ENCODE measurements at regions of chr18 and their contacts with region 1.

Region 1: GRCh38 chr18:35231052-35231451 is 9.8 kb upstream of the ZNF397 start:
- DNase-seq: peak; percentile 66 to 91 (median 74)
- ATAC-seq: peak; percentile 97
- H3K4me3 ChIP-seq: no peak overlapping the region
- H3K4me3 Mint-ChIP-seq: no peak overlapping the region
- H3K27ac ChIP-seq: no peak overlapping the region
- H3K27ac Mint-ChIP-seq: no peak overlapping the region
- H3K4me1 ChIP-seq: no peaks in the 10 kb centered on the region
- H3K4me1 Mint-ChIP-seq: peaks cover 4% of the 10 kb centered on the region
- H3K27me3 ChIP-seq: no peaks in the 10 kb centered on the region
- H3K27me3 Mint-ChIP-seq: no peaks in the 10 kb centered on the region
- CTCF ChIP-seq: peak; percentile 90

Region 2: DNA sequence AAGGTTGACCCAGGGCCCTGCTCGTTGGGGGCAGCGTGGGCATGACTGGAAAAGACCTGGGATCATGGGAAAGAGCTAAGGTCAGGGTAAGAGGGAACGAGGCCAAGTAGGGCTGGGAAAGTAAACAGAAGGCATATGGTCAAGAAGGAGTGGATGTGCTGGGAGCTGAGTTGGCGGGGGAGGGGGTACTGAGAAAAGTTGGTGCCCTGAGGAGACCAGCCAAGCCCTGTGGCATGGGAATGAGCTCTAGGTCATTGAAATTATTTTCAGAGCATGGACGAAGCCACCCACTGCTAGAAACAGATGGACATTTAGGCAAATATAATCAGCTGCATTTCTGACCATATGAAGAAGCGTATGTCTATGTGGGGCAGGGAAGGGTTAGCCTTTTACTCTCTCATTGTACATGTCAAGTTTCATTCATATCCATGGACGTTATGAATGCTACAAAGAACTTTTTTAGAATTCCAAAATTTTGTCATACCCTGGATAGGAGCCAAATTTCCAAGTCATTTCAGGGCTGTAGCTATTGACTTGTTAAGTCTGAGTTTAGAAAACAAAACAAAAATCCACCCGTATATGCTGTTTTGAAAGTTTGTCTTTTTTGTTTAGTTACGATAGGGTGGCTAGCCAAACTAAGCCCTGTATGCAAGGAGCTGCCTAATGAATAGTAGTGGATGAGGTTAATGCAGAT is 170.8 kb before region 1 on chr18:
- CTCF ChIA-PET with region 1: no interaction called
- POLR2A ChIA-PET with region 1: no interaction called
- intact Hi-C with region 1: no loop called
- DNase-seq: no peak
- ATAC-seq: no peak
- H3K4me3 ChIP-seq: no peak overlapping the region
- H3K4me3 Mint-ChIP-seq: no peak overlapping the region
- H3K27ac ChIP-seq: no peak overlapping the region
- H3K27ac Mint-ChIP-seq: no peak overlapping the region
- H3K4me1 ChIP-seq: peaks cover 16% of the 10 kb centered on the region
- H3K4me1 Mint-ChIP-seq: peaks cover 76% of the 10 kb centered on the region
- H3K27me3 ChIP-seq: no peaks in the 10 kb centered on the region
- H3K27me3 Mint-ChIP-seq: no peaks in the 10 kb centered on the region
- CTCF ChIP-seq: no peak

Region 3: DNA sequence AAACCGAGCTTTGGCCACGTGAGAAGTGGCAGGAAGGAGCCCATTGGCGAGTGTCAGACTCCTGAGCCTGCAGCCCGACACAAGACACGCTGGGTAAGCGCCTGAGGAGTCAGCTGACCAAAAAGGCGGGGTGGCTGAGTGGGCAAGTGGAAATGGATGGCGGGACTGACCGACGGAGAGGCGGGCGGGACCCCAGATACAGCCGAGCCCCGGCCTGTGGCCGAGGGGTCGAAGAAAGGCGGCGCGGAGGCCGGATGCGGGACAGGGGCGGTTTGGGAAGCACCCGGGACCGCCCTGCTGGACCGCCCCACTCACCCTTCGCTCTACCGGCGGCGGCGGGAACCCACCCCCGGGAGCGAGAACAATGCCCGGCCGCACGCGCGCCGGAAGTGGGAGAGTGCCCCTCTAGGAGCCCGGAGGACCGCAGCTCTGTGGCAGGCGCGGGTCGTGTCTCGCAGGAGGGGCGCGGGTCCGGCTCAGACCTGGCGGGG is 36.2 kb after region 1 on chr18:
- CTCF ChIA-PET with region 1: interaction called, 3 read pairs
- POLR2A ChIA-PET with region 1: no interaction called
- intact Hi-C with region 1: loop called in 1 of 2 experiments (anchors 5 kb)
- DNase-seq: peak; percentile 40 to 85 (median 66)
- ATAC-seq: peak; percentile 76
- H3K4me3 ChIP-seq: peak overlapping the region; percentile 76
- H3K4me3 Mint-ChIP-seq: peak overlapping the region; percentile 96
- H3K27ac ChIP-seq: peak overlapping the region; percentile 69 to 75
- H3K27ac Mint-ChIP-seq: peak overlapping the region; percentile 92
- H3K4me1 ChIP-seq: peaks cover 18% of the 10 kb centered on the region
- H3K4me1 Mint-ChIP-seq: peaks cover 28% of the 10 kb centered on the region
- H3K27me3 ChIP-seq: no peaks in the 10 kb centered on the region
- H3K27me3 Mint-ChIP-seq: no peaks in the 10 kb centered on the region
- CTCF ChIP-seq: no peak

Region 4: DNA sequence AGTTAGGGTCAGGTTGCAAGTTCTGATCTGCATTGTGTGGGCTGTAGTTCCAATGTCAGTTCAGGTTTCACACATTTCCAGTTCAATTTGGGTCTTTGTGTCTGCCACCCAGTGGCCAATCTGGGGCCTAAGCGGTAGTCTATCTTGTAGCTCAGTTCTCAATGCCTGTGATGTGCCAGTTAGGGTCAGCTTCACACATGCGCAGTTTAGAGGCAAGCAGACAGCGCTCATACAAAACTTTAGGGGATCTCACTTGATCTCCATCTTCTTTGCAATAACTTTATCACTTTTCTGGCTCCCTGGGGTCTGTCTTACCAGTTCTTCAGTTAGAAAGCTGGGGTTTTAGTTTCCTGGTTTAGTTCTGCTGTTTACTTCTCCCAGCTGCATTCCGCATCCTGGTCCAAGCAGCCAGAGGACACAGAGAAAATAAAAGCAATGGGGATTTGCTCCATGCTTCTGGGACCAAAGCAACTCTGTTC is 124.1 kb after region 1 on chr18:
- CTCF ChIA-PET with region 1: interaction called, 16 read pairs
- POLR2A ChIA-PET with region 1: no interaction called
- intact Hi-C with region 1: loop called (anchors 1 kb)
- DNase-seq: peak; percentile 39 to 85 (median 48)
- ATAC-seq: peak; percentile 95
- H3K4me3 ChIP-seq: no peak overlapping the region
- H3K4me3 Mint-ChIP-seq: no peak overlapping the region
- H3K27ac ChIP-seq: no peak overlapping the region
- H3K27ac Mint-ChIP-seq: no peak overlapping the region
- H3K4me1 ChIP-seq: no peaks in the 10 kb centered on the region
- H3K4me1 Mint-ChIP-seq: peaks cover 4% of the 10 kb centered on the region
- H3K27me3 ChIP-seq: no peaks in the 10 kb centered on the region
- H3K27me3 Mint-ChIP-seq: no peaks in the 10 kb centered on the region
- CTCF ChIP-seq: peak; percentile 68

Region 5: DNA sequence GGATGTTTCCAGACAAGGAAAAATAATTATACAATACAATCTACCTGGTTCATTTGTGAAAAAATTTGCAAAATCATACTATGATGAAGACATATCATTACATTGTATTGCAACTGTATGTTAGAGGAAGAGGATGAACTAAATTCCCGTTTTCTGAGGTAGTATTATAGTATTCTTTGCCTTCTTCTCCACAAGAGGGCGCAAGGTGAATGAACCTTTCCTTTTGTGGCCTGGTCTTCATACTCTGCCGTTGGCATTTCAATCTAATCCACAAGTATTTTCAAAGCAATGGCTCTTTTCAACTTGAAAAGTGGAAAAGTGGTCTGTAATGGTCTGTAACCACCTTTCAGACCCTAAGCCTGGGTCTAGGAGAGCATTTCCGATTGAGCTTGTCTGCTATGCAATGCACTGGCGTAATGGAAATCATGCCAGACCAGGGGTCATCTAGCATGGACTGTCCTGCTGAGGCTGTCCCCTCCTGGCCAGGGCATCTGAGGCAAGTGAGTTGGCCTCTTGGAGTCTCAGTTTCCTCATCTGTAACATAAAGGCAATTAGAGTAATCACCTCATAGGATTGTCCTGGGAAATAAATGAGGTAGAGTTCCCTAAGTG is 176.9 kb after region 1 on chr18:
- CTCF ChIA-PET with region 1: no interaction called
- POLR2A ChIA-PET with region 1: no interaction called
- intact Hi-C with region 1: loop called in 1 of 2 experiments (anchors 5 kb)
- DNase-seq: peak in 8 of 14 experiments; percentile 5 to 78 (median 44)
- ATAC-seq: peak; percentile 75
- H3K4me3 ChIP-seq: no peak overlapping the region
- H3K4me3 Mint-ChIP-seq: no peak overlapping the region
- H3K27ac ChIP-seq: no peak overlapping the region
- H3K27ac Mint-ChIP-seq: no peak overlapping the region
- H3K4me1 ChIP-seq: peaks cover 6% of the 10 kb centered on the region
- H3K4me1 Mint-ChIP-seq: peaks cover 24% of the 10 kb centered on the region
- H3K27me3 ChIP-seq: no peaks in the 10 kb centered on the region
- H3K27me3 Mint-ChIP-seq: peaks cover 10% of the 10 kb centered on the region
- CTCF ChIP-seq: peak; percentile 94

Region 6: GRCh38 chr18:35580701-35581539 is 349.9 kb after region 1 on chr18:
- CTCF ChIA-PET with region 1: no interaction called
- POLR2A ChIA-PET with region 1: no interaction called
- intact Hi-C with region 1: loop called in 1 of 2 experiments (anchors 10 kb)
- DNase-seq: peak; percentile 21 to 84 (median 44)
- ATAC-seq: peak; percentile 75
- H3K4me3 ChIP-seq: peak overlapping the region; percentile 55
- H3K4me3 Mint-ChIP-seq: peak overlapping the region; percentile 63
- H3K27ac ChIP-seq: peak overlapping the region; percentile 26 to 42
- H3K27ac Mint-ChIP-seq: no peak overlapping the region
- H3K4me1 ChIP-seq: peaks cover 18% of the 10 kb centered on the region
- H3K4me1 Mint-ChIP-seq: peaks cover 35% of the 10 kb centered on the region
- H3K27me3 ChIP-seq: no peaks in the 10 kb centered on the region
- H3K27me3 Mint-ChIP-seq: peaks cover 13% of the 10 kb centered on the region
- CTCF ChIP-seq: no peak

Region 7: DNA sequence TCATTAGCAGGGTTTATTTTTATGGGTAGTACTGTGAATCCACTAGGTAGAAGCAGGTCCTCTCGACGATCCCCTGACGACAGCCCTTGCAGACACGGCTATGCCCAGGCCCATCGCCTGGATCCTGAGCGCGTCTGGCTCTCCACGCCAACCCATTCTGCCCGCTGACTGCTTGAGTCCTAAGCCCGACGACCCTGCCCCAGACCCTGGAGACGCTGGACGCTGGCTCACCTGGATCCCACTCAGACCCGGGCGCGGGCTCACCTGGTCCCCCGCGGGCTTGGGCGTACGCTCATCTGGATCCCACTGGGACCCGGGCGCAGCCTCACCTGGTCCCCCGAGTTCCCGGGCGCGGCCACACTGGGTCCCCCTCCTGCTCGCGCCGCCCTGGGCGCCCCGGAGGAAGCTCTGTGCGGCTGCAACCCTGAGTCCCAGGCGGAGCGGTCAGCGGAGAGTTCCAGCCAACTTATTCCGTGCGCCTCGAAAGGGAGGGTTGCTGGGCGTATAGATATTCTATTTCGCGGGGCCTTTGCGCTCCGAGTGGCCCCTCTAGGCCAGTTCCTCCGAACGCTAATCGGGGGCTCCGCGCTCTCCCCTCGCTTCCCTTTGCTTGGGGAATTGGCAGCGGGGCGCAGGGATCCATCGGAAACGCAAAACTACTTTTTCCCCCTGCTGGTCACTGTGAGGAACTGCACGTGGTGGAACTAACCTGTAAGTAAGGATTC is 719.0 kb after region 1 on chr18:
- CTCF ChIA-PET with region 1: no interaction called
- POLR2A ChIA-PET with region 1: no interaction called
- intact Hi-C with region 1: loop called in 1 of 2 experiments (anchors 1 kb)
- DNase-seq: peak; percentile 21 to 81 (median 36)
- ATAC-seq: peak; percentile 85
- H3K4me3 ChIP-seq: peak overlapping the region; percentile 59
- H3K4me3 Mint-ChIP-seq: peak overlapping the region; percentile 84
- H3K27ac ChIP-seq: no peak overlapping the region
- H3K27ac Mint-ChIP-seq: no peak overlapping the region
- H3K4me1 ChIP-seq: peaks cover 9% of the 10 kb centered on the region
- H3K4me1 Mint-ChIP-seq: peaks cover 6% of the 10 kb centered on the region
- H3K27me3 ChIP-seq: peaks cover 8 to 9% of the 10 kb centered on the region in 2 experiments
- H3K27me3 Mint-ChIP-seq: peaks cover 32% of the 10 kb centered on the region
- CTCF ChIP-seq: peak; percentile 95